A673 (cell line): ENCODE measurements at regions of chr11 and their contacts with region 1.

Region 1: DNA sequence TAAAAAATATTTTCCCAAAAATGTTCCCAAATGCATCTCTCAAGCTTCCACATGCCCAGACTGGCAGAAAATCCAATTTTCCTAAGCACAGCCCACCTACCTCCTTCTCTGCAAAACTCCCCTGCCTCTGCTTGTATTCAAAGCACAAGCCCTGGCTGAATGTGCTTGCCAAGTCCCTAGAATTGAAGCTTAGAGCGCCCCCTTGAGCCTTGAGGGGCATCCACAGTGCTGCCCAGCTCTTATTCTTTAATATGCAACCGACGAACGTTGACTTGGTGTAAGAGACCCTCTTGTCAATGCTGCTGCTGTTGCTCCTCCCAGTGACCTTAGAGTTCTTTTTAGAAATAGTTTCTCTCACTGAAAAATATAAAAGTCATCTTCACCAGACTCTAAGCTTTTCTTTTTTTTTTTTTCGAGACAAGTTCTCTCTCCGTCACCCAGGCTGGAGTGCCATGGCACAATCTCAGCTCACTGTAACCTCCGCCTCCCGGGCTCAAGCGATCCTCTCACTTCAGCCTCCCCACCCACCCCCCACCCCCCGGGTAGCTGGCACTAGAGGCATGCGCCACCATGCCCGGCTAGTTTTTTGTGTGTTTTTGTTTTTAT is 63.5 kb upstream of the CAPRIN1 start:
- DNase-seq: peak; percentile 99
- H3K4me3 ChIP-seq: no peak overlapping the region
- H3K27ac ChIP-seq: no peak overlapping the region
- H3K4me1 ChIP-seq: peaks cover 17% of the 10 kb centered on the region
- H3K27me3 ChIP-seq: no peaks in the 10 kb centered on the region
- CTCF ChIP-seq: peak; percentile 100

Region 2: DNA sequence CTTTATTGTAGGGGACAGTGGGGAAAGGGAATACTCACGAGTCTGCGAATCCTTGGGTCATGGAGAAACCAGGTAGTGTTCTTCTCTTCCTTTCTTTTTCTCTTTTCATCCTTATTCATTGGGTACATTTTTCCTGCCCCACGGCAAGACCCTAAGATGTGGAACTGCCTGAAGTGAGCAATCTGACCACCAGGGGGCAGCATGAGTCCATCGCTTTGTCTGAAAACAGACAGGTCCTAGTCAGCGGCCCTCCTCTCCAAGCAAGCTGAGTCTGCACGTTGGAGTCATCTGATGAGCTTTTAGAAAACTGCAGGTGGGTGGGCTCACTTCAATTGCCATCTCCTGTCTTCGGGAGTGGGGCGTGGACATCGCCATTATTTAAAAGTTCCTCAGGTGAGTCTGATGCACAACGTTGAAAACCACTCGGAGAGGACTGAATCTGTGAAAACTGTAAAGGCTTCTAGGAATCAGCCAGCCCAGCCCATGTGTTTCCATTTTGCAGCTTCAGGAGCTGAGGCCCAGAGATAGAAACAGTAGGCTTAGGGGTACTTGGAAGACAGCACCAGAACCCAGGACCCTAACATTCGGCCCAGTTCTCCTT is 179.8 kb before region 1 on chr11:
- CTCF ChIA-PET with region 1: interaction called, 13 read pairs
- POLR2A ChIA-PET with region 1: no interaction called
- intact Hi-C with region 1: no loop called
- DNase-seq: peak; percentile 98
- H3K4me3 ChIP-seq: no peak overlapping the region
- H3K27ac ChIP-seq: no peak overlapping the region
- H3K4me1 ChIP-seq: peaks cover 4% of the 10 kb centered on the region
- H3K27me3 ChIP-seq: no peaks in the 10 kb centered on the region
- CTCF ChIP-seq: peak; percentile 100

Region 3: GRCh38 chr11:33835143-33835878 is 152.8 kb before region 1 on chr11:
- CTCF ChIA-PET with region 1: interaction called, 27 read pairs
- POLR2A ChIA-PET with region 1: no interaction called
- intact Hi-C with region 1: loop called (anchors 1 kb)
- DNase-seq: peak; percentile 89
- H3K4me3 ChIP-seq: peak overlapping the region; percentile 24
- H3K27ac ChIP-seq: peak overlapping the region; percentile 57
- H3K4me1 ChIP-seq: peaks cover 39% of the 10 kb centered on the region
- H3K27me3 ChIP-seq: no peaks in the 10 kb centered on the region
- CTCF ChIP-seq: peak; percentile 86

Region 4: GRCh38 chr11:33857933-33858371 is 130.1 kb before region 1 on chr11:
- CTCF ChIA-PET with region 1: interaction called, 9 read pairs
- POLR2A ChIA-PET with region 1: no interaction called
- intact Hi-C with region 1: loop called (anchors 1 kb)
- DNase-seq: peak; percentile 97
- H3K4me3 ChIP-seq: no peak overlapping the region
- H3K27ac ChIP-seq: peak overlapping the region; percentile 24
- H3K4me1 ChIP-seq: peaks cover 65% of the 10 kb centered on the region
- H3K27me3 ChIP-seq: no peaks in the 10 kb centered on the region
- CTCF ChIP-seq: peak; percentile 100

Region 5: DNA sequence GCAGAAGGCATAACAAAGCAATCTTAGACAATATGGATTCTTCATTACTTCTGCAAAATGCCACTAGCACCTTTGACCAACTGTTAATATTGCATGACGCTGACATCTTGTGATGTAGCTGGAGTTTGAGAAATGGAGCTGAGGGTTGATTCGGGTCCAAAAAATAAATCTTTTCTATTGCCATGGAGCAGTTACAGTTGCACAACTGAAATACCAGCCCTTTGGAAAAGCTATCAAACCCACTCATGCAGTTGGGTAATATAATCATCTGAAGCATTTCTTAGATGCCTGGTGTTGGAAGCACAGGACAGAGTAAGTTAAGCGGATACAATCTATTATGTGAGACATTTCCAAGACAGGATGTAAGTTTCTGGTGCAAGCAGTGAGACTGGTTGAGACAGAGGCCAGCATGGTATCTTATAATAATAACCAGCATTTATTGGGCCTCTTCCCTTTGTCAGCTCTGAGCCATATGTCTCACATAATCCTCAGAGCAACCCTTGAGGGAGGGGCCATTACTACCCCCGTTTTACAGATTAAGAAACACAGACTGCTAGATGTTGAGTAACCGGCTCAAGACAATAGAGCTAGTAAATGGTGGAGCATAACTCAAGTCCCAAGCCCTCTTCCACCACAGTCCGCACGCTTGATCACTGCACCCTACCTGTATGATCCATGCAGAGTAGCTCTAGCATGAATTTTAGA is 11.4 kb before region 1 on chr11:
- CTCF ChIA-PET with region 1: interaction called, 14 read pairs
- POLR2A ChIA-PET with region 1: no interaction called
- intact Hi-C with region 1: no loop called
- DNase-seq: peak; percentile 96
- H3K4me3 ChIP-seq: no peak overlapping the region
- H3K27ac ChIP-seq: peak overlapping the region; percentile 75
- H3K4me1 ChIP-seq: peaks cover 49% of the 10 kb centered on the region
- H3K27me3 ChIP-seq: no peaks in the 10 kb centered on the region
- CTCF ChIP-seq: no peak

Region 6: GRCh38 chr11:34105079-34105956 is 117.2 kb after region 1 on chr11 and contains the start of gene NAT10:
- CTCF ChIA-PET with region 1: interaction called, 13 read pairs
- POLR2A ChIA-PET with region 1: interaction called, 6 read pairs
- intact Hi-C with region 1: no loop called
- DNase-seq: peak; percentile 100
- H3K4me3 ChIP-seq: peak within 1 kb of the TSS; percentile 55
- H3K27ac ChIP-seq: peak within 1 kb of the TSS; percentile 93
- H3K4me1 ChIP-seq: peaks cover 42% of the 10 kb centered on the region
- H3K27me3 ChIP-seq: no peaks in the 10 kb centered on the region
- CTCF ChIP-seq: peak; percentile 30; the same call in 1 of the 2 replicates
- total RNA-seq, gene NAT10: 180 and 192 TPM in 2 replicates

Region 7: DNA sequence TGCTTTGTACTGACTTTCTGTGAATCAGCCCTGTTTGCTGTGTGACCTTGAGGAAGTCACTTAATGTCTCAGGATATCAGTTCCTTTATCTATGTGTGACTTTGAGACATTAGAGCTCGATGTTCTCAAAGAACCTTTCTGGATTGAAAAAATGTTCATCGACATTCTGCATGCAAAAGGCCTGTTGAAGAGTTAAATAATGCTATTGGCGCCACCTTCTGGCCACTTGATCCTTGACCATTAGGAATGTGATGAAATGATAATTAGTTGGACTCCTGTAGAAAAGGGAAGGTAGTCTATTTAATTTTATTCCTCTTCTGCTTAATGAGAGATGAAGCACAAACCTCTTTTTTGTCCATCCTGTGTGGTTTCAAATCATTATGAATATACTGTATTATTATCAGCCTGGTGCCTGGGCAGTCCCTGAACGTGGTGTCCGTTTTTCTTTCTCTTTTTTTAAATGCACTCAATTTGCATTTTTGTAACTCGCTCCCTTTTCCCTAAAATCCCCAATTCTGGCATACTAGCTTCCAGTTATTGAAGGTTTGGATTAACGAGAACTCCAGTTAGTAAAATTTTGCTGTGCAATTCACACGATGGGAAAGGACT is 504.8 kb after region 1 on chr11:
- CTCF ChIA-PET with region 1: no interaction called
- POLR2A ChIA-PET with region 1: no interaction called
- intact Hi-C with region 1: loop called (anchors 5 kb)
- DNase-seq: peak; percentile 91
- H3K4me3 ChIP-seq: no peak overlapping the region
- H3K27ac ChIP-seq: no peak overlapping the region
- H3K4me1 ChIP-seq: no peaks in the 10 kb centered on the region
- H3K27me3 ChIP-seq: no peaks in the 10 kb centered on the region
- CTCF ChIP-seq: peak; percentile 99

Region 8: GRCh38 chr11:34583818-34584217 is 595.7 kb after region 1 on chr11:
- CTCF ChIA-PET with region 1: no interaction called
- POLR2A ChIA-PET with region 1: no interaction called
- intact Hi-C with region 1: no loop called
- DNase-seq: no peak
- H3K4me3 ChIP-seq: no peak overlapping the region
- H3K27ac ChIP-seq: no peak overlapping the region
- H3K4me1 ChIP-seq: peaks cover 3% of the 10 kb centered on the region
- H3K27me3 ChIP-seq: peaks cover 43% of the 10 kb centered on the region
- CTCF ChIP-seq: no peak